ENCODE measurements at regions of chr6 and their contacts with region 1.

Region 1: DNA sequence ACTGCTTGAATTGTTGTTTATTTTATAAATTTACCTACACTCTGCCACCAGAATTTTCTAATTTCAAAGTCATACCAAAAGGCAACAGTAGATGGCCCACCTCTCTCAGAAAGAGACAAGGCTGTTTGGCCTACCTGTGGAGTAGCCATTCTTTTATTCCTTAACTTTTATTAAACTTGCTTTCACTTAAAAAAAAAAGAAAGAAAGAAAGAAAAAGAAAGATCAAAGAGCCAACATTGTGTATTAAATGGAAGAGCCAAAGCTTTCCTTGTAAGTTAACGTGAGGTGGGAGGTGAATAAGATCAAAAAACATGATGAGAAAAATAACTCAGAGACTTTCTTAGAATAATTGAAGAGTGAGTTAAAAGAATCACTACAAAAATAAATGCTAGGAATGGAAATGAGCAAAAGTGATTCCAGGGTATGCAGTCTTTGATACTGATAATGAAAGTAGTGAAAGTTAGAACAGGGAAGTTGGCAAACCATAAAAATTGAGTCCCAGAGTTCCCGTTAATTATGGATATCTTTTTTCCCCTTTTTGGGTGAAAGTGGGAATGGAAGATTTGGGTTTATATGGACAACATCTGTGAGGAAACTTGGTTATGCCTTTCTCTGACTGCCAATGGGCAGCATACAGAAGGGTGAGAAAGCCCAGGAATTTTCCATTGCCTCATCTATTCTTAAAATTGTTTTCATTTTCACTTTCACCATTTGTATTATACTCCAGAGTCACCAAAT is 35.9 kb upstream of the MYB start:
- DNase-seq: no peak
- H3K4me3 ChIP-seq: no peak overlapping the region
- H3K27ac ChIP-seq: no peak overlapping the region
- H3K4me1 ChIP-seq: peaks cover 3 to 7% (median 5%) of the 10 kb centered on the region in 4 experiments; a peak in 4 of 7 replicates
- H3K27me3 ChIP-seq: no peaks in the 10 kb centered on the region
- CTCF ChIP-seq: peak in 2 of 3 experiments; percentile 55 to 61; a peak in 2 of 4 replicates
- EP300 ChIP-seq: no peak
- POLR2A ChIP-seq: no peak
- RAD21 ChIP-seq: peak; percentile 83 to 88

Region 2: GRCh38 chr6:135132776-135133175 is 12.5 kb before region 1 on chr6:
- CTCF ChIA-PET with region 1: interaction called, 22 read pairs
- POLR2A ChIA-PET with region 1: no interaction called
- DNase-seq: no peak
- H3K4me3 ChIP-seq: no peak overlapping the region
- H3K27ac ChIP-seq: no peak overlapping the region
- H3K4me1 ChIP-seq: no peaks in the 10 kb centered on the region
- H3K27me3 ChIP-seq: no peaks in the 10 kb centered on the region
- CTCF ChIP-seq: no peak
- EP300 ChIP-seq: no peak
- POLR2A ChIP-seq: no peak
- RAD21 ChIP-seq: no peak

Region 3: GRCh38 chr6:135162678-135163439 is 17.6 kb after region 1 on chr6:
- CTCF ChIA-PET with region 1: interaction called, 26 read pairs
- POLR2A ChIA-PET with region 1: no interaction called
- DNase-seq: peak; percentile 77 to 93
- H3K4me3 ChIP-seq: no peak overlapping the region
- H3K27ac ChIP-seq: no peak overlapping the region
- H3K4me1 ChIP-seq: 0 out of 7 replicates have a peak, but pooled peaks cover 0 to 2% (median 0%) of the 10 kb centered on the region in 4 experiments
- H3K27me3 ChIP-seq: no peaks in the 10 kb centered on the region
- CTCF ChIP-seq: peak; percentile 65 to 88 (median 83)
- EP300 ChIP-seq: no peak
- POLR2A ChIP-seq: no peak
- RAD21 ChIP-seq: peak; percentile 42 to 54

Region 4: GRCh38 chr6:135183532-135184440 is 38.6 kb after region 1 on chr6:
- CTCF ChIA-PET with region 1: interaction called, 11 read pairs
- POLR2A ChIA-PET with region 1: interaction called, 4 read pairs
- DNase-seq: peak in 1 of 2 experiments; percentile 79
- H3K4me3 ChIP-seq: peak overlapping the region; percentile 62 to 86 (median 76)
- H3K27ac ChIP-seq: no peak overlapping the region
- H3K4me1 ChIP-seq: peaks cover 0 to 7% (median 2%) of the 10 kb centered on the region in 4 experiments; a peak in 2 of 7 replicates
- H3K27me3 ChIP-seq: peaks cover 0 to 26% (median 18%) of the 10 kb centered on the region in 4 experiments; a peak in 6 of 7 replicates
- CTCF ChIP-seq: peak; percentile 72 to 86 (median 85)
- EP300 ChIP-seq: no peak
- POLR2A ChIP-seq: no peak
- RAD21 ChIP-seq: peak; percentile 70 to 81

Region 5: DNA sequence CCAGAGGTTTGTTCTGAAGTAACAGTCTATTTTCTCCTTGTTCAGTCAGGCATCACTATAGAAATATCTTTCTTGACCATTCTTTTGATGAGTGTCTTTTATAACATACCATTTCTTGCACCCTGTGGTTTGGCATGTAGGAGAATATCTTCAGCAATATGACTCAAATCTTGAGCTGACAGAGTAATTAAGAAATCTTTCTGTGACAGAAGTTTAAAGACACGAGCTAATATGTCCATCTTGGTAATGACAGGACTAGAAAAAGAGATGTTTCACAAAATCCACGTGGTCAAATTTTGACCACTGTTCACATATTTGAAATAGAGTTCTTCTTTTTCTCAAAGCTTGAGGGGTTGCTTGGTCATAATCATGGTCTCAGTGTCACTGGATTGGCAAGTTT is 185.8 kb after region 1 on chr6:
- CTCF ChIA-PET with region 1: interaction called, 10 read pairs
- POLR2A ChIA-PET with region 1: no interaction called
- DNase-seq: no peak
- H3K4me3 ChIP-seq: no peak overlapping the region
- H3K27ac ChIP-seq: no peak overlapping the region
- H3K4me1 ChIP-seq: no peaks in the 10 kb centered on the region
- H3K27me3 ChIP-seq: no peaks in the 10 kb centered on the region
- CTCF ChIP-seq: no peak
- EP300 ChIP-seq: no peak
- POLR2A ChIP-seq: no peak
- RAD21 ChIP-seq: no peak

Region 6: DNA sequence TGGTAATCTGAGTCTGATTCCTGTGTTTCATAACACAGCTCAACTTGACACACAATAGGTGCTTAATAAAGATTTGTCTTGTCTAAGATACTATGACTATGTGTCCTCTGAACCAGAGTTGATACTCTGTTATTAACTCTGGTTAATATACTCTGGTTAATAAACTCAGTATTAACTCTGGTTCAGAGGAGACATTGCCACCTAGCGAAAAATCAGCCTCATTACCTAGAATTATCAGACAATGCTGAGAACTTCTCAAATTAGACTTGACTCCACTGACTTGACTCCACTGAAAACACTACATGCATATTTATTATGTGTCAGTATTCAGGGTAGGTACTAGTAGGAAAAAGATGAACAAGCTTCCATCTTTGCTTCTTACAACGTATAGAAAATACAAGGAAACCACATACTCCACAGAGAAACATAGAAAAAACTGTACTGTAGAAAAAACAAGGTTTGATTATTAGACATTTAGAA is 278.5 kb after region 1 on chr6:
- CTCF ChIA-PET with region 1: interaction called, 78 read pairs
- POLR2A ChIA-PET with region 1: no interaction called
- DNase-seq: no peak
- H3K4me3 ChIP-seq: no peak overlapping the region
- H3K27ac ChIP-seq: no peak overlapping the region
- H3K4me1 ChIP-seq: no peaks in the 10 kb centered on the region
- H3K27me3 ChIP-seq: no peaks in the 10 kb centered on the region
- CTCF ChIP-seq: peak in 2 of 3 experiments; percentile 43 to 71; a peak in 2 of 4 replicates
- EP300 ChIP-seq: no peak
- POLR2A ChIP-seq: no peak
- RAD21 ChIP-seq: peak; percentile 78 to 81